ENCODE measurements at regions of chr4 and their contacts with region 1.

Region 1: GRCh38 chr4:135116651-135117050 is 915.1 kb upstream of the PABPC4L start:
- DNase-seq: no peak
- ATAC-seq: no peak
- H3K4me3 ChIP-seq: no peak overlapping the region
- H3K4me3 Mint-ChIP-seq: no peak overlapping the region
- H3K27ac ChIP-seq: no peak overlapping the region
- H3K27ac Mint-ChIP-seq: no peak overlapping the region
- H3K4me1 ChIP-seq: no peaks in the 10 kb centered on the region
- H3K4me1 Mint-ChIP-seq: no peaks in the 10 kb centered on the region
- H3K27me3 ChIP-seq: no peaks in the 10 kb centered on the region
- H3K27me3 Mint-ChIP-seq: no peaks in the 10 kb centered on the region

Region 2: GRCh38 chr4:133263082-133263481 is 1853.6 kb before region 1 on chr4:
- CTCF ChIA-PET with region 1: no interaction called
- POLR2A ChIA-PET with region 1: interaction called in 1 of 2 experiments, 11 read pairs
- DNase-seq: no peak
- ATAC-seq: no peak
- H3K4me3 ChIP-seq: no peak overlapping the region
- H3K4me3 Mint-ChIP-seq: no peak overlapping the region
- H3K27ac ChIP-seq: no peak overlapping the region
- H3K27ac Mint-ChIP-seq: no peak overlapping the region
- H3K4me1 ChIP-seq: no peaks in the 10 kb centered on the region
- H3K4me1 Mint-ChIP-seq: no peaks in the 10 kb centered on the region
- H3K27me3 ChIP-seq: no peaks in the 10 kb centered on the region
- H3K27me3 Mint-ChIP-seq: no peaks in the 10 kb centered on the region

Region 3: DNA sequence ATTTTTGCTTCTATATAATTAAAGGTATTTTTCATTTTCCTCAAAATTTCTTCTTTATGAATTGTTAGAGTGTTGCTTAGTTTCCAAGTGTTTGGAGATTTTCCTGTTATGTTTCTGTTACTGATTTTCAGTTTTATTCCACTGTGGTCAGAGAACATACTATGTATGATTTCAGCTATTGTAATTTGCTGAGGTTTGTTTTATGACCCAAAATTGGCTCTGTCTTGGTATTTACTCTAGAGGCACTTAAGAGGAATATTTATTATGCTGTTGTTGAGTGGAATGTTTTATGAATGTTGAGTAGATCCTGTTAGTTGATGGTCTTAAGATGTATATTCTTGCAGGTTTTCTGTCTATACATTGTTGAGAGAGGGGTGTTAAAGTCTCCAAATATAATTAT is 1178.6 kb before region 1 on chr4:
- CTCF ChIA-PET with region 1: no interaction called
- POLR2A ChIA-PET with region 1: no interaction called
- DNase-seq: no peak
- ATAC-seq: no peak
- H3K4me3 ChIP-seq: no peak overlapping the region
- H3K4me3 Mint-ChIP-seq: no peak overlapping the region
- H3K27ac ChIP-seq: no peak overlapping the region
- H3K27ac Mint-ChIP-seq: no peak overlapping the region
- H3K4me1 ChIP-seq: no peaks in the 10 kb centered on the region
- H3K4me1 Mint-ChIP-seq: no peaks in the 10 kb centered on the region
- H3K27me3 ChIP-seq: no peaks in the 10 kb centered on the region
- H3K27me3 Mint-ChIP-seq: no peaks in the 10 kb centered on the region

Region 4: GRCh38 chr4:134408897-134409296 is 707.8 kb before region 1 on chr4:
- CTCF ChIA-PET with region 1: no interaction called
- POLR2A ChIA-PET with region 1: no interaction called
- DNase-seq: no peak
- ATAC-seq: no peak
- H3K4me3 ChIP-seq: no peak overlapping the region
- H3K4me3 Mint-ChIP-seq: no peak overlapping the region
- H3K27ac ChIP-seq: no peak overlapping the region
- H3K27ac Mint-ChIP-seq: no peak overlapping the region
- H3K4me1 ChIP-seq: no peaks in the 10 kb centered on the region
- H3K4me1 Mint-ChIP-seq: no peaks in the 10 kb centered on the region
- H3K27me3 ChIP-seq: no peaks in the 10 kb centered on the region
- H3K27me3 Mint-ChIP-seq: no peaks in the 10 kb centered on the region

Region 5: GRCh38 chr4:135136712-135137111 is 20.1 kb after region 1 on chr4:
- CTCF ChIA-PET with region 1: no interaction called
- POLR2A ChIA-PET with region 1: no interaction called
- DNase-seq: no peak
- ATAC-seq: no peak
- H3K4me3 ChIP-seq: no peak overlapping the region
- H3K4me3 Mint-ChIP-seq: no peak overlapping the region
- H3K27ac ChIP-seq: no peak overlapping the region
- H3K27ac Mint-ChIP-seq: no peak overlapping the region
- H3K4me1 ChIP-seq: no peaks in the 10 kb centered on the region
- H3K4me1 Mint-ChIP-seq: no peaks in the 10 kb centered on the region
- H3K27me3 ChIP-seq: no peaks in the 10 kb centered on the region
- H3K27me3 Mint-ChIP-seq: no peaks in the 10 kb centered on the region

Region 6: GRCh38 chr4:135694066-135694465 is 577.4 kb after region 1 on chr4:
- CTCF ChIA-PET with region 1: no interaction called
- POLR2A ChIA-PET with region 1: no interaction called
- DNase-seq: no peak
- ATAC-seq: no peak
- H3K4me3 ChIP-seq: no peak overlapping the region
- H3K4me3 Mint-ChIP-seq: no peak overlapping the region
- H3K27ac ChIP-seq: no peak overlapping the region
- H3K27ac Mint-ChIP-seq: no peak overlapping the region
- H3K4me1 ChIP-seq: no peaks in the 10 kb centered on the region
- H3K4me1 Mint-ChIP-seq: no peaks in the 10 kb centered on the region
- H3K27me3 ChIP-seq: no peaks in the 10 kb centered on the region
- H3K27me3 Mint-ChIP-seq: no peaks in the 10 kb centered on the region

Measured in T-cell (primary cell).